CD4-positive, alpha-beta T cell (primary cell): ENCODE measurements at regions of chr15 and their contacts with region 1.

Region 1: GRCh38 chr15:66729331-66729951 is 27.4 kb downstream of the SMAD6 start:
- DNase-seq: no peak
- ATAC-seq: no peak
- H3K4me3 ChIP-seq: no peak overlapping the region
- H3K4me3 Mint-ChIP-seq: no peak overlapping the region
- H3K27ac ChIP-seq: no peak overlapping the region
- H3K27ac Mint-ChIP-seq: no peak overlapping the region
- H3K4me1 ChIP-seq: no peaks in the 10 kb centered on the region
- H3K4me1 Mint-ChIP-seq: no peaks in the 10 kb centered on the region
- H3K27me3 ChIP-seq: no peaks in the 10 kb centered on the region
- H3K27me3 Mint-ChIP-seq: no peaks in the 10 kb centered on the region
- CTCF ChIP-seq: no peak

Region 2: GRCh38 chr15:66629817-66630576 is 99.4 kb before region 1 on chr15:
- CTCF ChIA-PET with region 1: no interaction called
- POLR2A ChIA-PET with region 1: no interaction called
- intact Hi-C with region 1: loop called in 1 of 2 experiments (anchors 5 kb)
- DNase-seq: no peak
- ATAC-seq: no peak
- H3K4me3 ChIP-seq: no peak overlapping the region
- H3K4me3 Mint-ChIP-seq: no peak overlapping the region
- H3K27ac ChIP-seq: no peak overlapping the region
- H3K27ac Mint-ChIP-seq: no peak overlapping the region
- H3K4me1 ChIP-seq: no peaks in the 10 kb centered on the region
- H3K4me1 Mint-ChIP-seq: no peaks in the 10 kb centered on the region
- H3K27me3 ChIP-seq: no peaks in the 10 kb centered on the region
- H3K27me3 Mint-ChIP-seq: no peaks in the 10 kb centered on the region
- CTCF ChIP-seq: no peak

Region 3: GRCh38 chr15:66830358-66830757 is 100.9 kb after region 1 on chr15:
- CTCF ChIA-PET with region 1: no interaction called
- POLR2A ChIA-PET with region 1: no interaction called
- intact Hi-C with region 1: no loop called
- DNase-seq: peak in 2 of 14 experiments; percentile 21 to 39
- ATAC-seq: no peak
- H3K4me3 ChIP-seq: no peak overlapping the region
- H3K4me3 Mint-ChIP-seq: no peak overlapping the region
- H3K27ac ChIP-seq: no peak overlapping the region
- H3K27ac Mint-ChIP-seq: no peak overlapping the region
- H3K4me1 ChIP-seq: no peaks in the 10 kb centered on the region
- H3K4me1 Mint-ChIP-seq: no peaks in the 10 kb centered on the region
- H3K27me3 ChIP-seq: no peaks in the 10 kb centered on the region
- H3K27me3 Mint-ChIP-seq: peaks cover 6% of the 10 kb centered on the region
- CTCF ChIP-seq: no peak